ENCODE measurements at regions of chr13 and their contacts with region 1.

Region 1: GRCh38 chr13:41054212-41054877 is 7.0 kb upstream of the WBP4 start:
- DNase-seq: no peak
- ATAC-seq: peak; percentile 55
- H3K4me3 ChIP-seq: no peak overlapping the region
- H3K27ac ChIP-seq: no peak overlapping the region
- H3K4me1 ChIP-seq: peaks cover 4 to 6% of the 10 kb centered on the region in 2 donors
- H3K27me3 ChIP-seq: no peaks in the 10 kb centered on the region

Region 2: GRCh38 chr13:40982772-40983171 is 71.6 kb before region 1 on chr13:
- intact Hi-C with region 1: loop called in 1 of 2 experiments (anchors 10 kb)
- DNase-seq: no peak
- ATAC-seq: peak; percentile 74
- H3K4me3 ChIP-seq: no peak overlapping the region
- H3K27ac ChIP-seq: no peak overlapping the region
- H3K4me1 ChIP-seq: peaks cover 2 to 4% of the 10 kb centered on the region in 2 donors
- H3K27me3 ChIP-seq: no peaks in the 10 kb centered on the region

Region 3: DNA sequence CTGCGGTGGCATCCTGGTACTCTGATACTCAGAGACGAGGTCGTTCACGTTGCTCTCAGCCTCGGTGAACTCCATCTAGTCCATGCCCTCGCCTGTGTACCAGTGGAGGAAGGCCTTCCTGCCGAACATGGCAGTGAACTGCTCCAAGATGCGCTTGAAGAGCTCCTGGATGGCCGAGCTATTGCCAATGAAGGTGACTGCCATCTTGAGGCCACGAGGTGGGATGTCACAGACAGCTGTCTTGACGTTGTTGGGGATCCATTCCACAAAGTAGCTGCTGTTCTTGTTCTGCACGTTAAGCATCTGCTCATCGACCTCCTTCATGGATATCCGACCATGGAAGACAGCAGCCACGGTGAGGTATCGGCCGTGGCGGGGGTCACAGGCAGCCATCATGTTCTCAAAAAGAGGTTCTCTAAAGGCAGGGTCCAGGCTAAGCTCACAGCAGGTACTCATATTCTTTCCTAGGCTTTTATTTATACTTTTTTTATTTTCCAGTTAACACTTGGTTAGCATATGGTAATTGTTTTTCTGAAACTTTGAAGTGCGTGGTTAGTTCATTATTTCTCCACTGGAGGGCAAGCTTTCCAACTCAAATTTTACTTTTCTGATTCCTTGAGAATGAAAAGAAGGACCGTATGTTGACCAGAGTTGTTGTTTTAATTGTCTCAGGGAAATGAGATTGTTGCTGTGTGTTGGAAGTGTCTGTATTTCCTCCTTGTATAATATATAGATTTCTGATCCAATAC is 330.6 kb after region 1 on chr13:
- intact Hi-C with region 1: no loop called
- DNase-seq: no peak
- ATAC-seq: no peak
- H3K4me3 ChIP-seq: no peak overlapping the region
- H3K27ac ChIP-seq: no peak overlapping the region
- H3K4me1 ChIP-seq: no peaks in the 10 kb centered on the region
- H3K27me3 ChIP-seq: no peaks in the 10 kb centered on the region

Region 4: GRCh38 chr13:41622432-41623429 is 568.4 kb after region 1 on chr13:
- intact Hi-C with region 1: no loop called
- DNase-seq: no peak
- ATAC-seq: peak; percentile 90
- H3K4me3 ChIP-seq: no peak overlapping the region
- H3K27ac ChIP-seq: peak overlapping the region; percentile 88 to 92
- H3K4me1 ChIP-seq: peaks cover 0 to 6% of the 10 kb centered on the region in 2 donors
- H3K27me3 ChIP-seq: no peaks in the 10 kb centered on the region